ENCODE measurements at regions of chr10 and their contacts with region 1.

Region 1: GRCh38 chr10:60661637-60662036 is 116.6 kb upstream of the CDK1 start:
- DNase-seq: peak; percentile 60
- ATAC-seq: peak; percentile 75
- H3K4me3 ChIP-seq: no peak overlapping the region
- H3K27ac ChIP-seq: no peak overlapping the region
- H3K4me1 ChIP-seq: peaks cover 2% of the 10 kb centered on the region
- H3K27me3 ChIP-seq: no peaks in the 10 kb centered on the region
- CTCF ChIP-seq: no peak
- POLR2A ChIP-seq: no peak
- RAD21 ChIP-seq: no peak

Region 2: DNA sequence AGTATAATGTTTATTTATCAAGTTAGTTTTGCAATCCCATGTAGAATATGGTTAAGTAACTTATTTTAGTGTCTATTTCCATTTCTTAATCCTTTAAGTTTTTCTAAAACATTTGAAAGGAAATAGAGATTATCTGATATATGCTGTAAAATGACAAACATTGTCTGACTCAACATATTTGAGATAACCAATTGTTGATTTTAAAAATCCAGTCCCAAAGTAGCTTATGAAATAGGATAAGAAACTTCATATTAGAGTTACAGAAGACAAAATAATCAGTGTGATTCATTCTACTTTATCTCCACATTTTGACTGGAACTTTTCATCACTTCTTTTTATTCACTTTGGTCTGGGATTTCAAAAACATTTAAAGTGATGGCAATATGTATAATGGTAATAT is 77.9 kb after region 1 on chr10:
- CTCF ChIA-PET with region 1: no interaction called
- POLR2A ChIA-PET with region 1: no interaction called
- dilution Hi-C with region 1: no loop called
- in situ Hi-C with region 1: no loop called
- intact Hi-C with region 1: loop called (anchors 2 kb)
- DNase-seq: peak; percentile 52
- ATAC-seq: peak; percentile 72
- H3K4me3 ChIP-seq: no peak overlapping the region
- H3K27ac ChIP-seq: no peak overlapping the region
- H3K4me1 ChIP-seq: no peaks in the 10 kb centered on the region; the same call in 1 of the 2 replicates
- H3K27me3 ChIP-seq: peaks cover 22% of the 10 kb centered on the region
- CTCF ChIP-seq: no peak
- POLR2A ChIP-seq: no peak
- RAD21 ChIP-seq: no peak

Measured in IMR-90 (cell line).